ENCODE measurements at regions of chr5 and their contacts with region 1.

Region 1: GRCh38 chr5:152329761-152330283 is 75.3 kb downstream of the NMUR2 start:
- DNase-seq: no peak
- ATAC-seq: no peak
- H3K4me3 ChIP-seq: no peak overlapping the region
- H3K27ac ChIP-seq: no peak overlapping the region
- H3K4me1 ChIP-seq: no peaks in the 10 kb centered on the region
- H3K27me3 ChIP-seq: no peaks in the 10 kb centered on the region
- CTCF ChIP-seq: no peak
- EP300 ChIP-seq: no peak
- POLR2A ChIP-seq: no peak
- RAD21 ChIP-seq: no peak

Region 2: DNA sequence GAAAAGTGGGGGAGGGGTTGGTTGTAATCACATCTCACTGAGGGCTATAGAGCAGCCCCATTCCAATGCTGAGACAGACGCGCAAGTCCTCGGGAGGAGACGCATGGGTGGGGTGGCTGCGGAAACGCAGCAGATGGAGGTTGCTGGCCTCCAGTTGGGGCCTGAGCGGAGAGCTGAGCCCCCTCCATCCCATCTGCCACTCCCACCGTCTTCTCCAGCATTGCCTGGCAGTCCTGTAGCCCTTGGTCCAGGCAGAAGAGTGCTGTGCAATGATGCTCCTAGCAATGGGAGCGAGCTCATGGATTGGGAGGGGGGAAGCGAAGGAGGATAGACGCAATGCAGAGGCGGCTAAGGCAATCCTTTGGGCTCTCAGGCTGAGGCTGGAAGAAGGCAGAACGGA is 325.7 kb before region 1 on chr5:
- CTCF ChIA-PET with region 1: no interaction called
- POLR2A ChIA-PET with region 1: no interaction called
- in situ Hi-C with region 1: no loop called
- intact Hi-C with region 1: no loop called
- DNase-seq: no peak
- ATAC-seq: no peak
- H3K4me3 ChIP-seq: no peak overlapping the region
- H3K27ac ChIP-seq: no peak overlapping the region
- H3K4me1 ChIP-seq: no peaks in the 10 kb centered on the region
- H3K27me3 ChIP-seq: no peaks in the 10 kb centered on the region
- CTCF ChIP-seq: no peak
- EP300 ChIP-seq: no peak
- POLR2A ChIP-seq: no peak
- RAD21 ChIP-seq: no peak

Region 3: DNA sequence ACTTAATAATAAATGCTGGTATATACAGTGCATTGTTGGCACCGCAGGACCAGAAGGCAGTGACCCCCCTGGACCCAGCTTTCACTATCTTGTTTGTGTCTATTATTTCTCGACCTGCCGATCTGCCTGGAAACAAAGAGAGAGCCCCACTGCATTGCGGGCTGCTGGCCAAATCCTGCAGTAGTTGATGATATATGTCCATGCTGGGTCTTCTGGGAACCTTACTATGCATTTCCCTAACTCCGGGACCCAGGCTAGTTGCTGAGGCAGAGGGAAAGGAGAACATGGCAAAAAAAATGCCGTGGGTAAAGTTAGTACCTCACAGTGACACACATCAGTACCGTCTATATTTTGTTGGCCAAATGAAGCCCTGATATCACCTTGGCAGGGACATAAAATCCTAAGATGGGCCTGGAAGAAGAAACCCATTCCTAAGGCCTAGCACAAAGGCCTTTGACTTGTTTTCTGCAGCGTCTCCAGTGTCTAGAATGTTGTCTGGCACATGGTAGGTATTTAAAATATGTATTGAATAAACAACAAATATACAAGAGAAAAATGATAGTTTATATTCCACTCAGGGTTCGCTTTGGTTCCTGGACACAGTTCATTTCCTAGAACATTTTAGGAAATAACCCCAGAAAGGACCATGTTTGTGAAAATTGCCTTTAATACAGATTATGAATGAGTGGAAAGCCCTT is 29.2 kb after region 1 on chr5:
- CTCF ChIA-PET with region 1: no interaction called
- POLR2A ChIA-PET with region 1: no interaction called
- in situ Hi-C with region 1: no loop called
- intact Hi-C with region 1: loop called (anchors 1 kb)
- DNase-seq: no peak
- ATAC-seq: no peak
- H3K4me3 ChIP-seq: no peak overlapping the region
- H3K27ac ChIP-seq: no peak overlapping the region
- H3K4me1 ChIP-seq: no peaks in the 10 kb centered on the region
- H3K27me3 ChIP-seq: no peaks in the 10 kb centered on the region; a peak in 2 of 5 replicates
- CTCF ChIP-seq: no peak
- EP300 ChIP-seq: no peak
- POLR2A ChIP-seq: no peak
- RAD21 ChIP-seq: no peak

Region 4: GRCh38 chr5:152505442-152506042 is 175.7 kb after region 1 on chr5:
- CTCF ChIA-PET with region 1: no interaction called
- POLR2A ChIA-PET with region 1: no interaction called
- in situ Hi-C with region 1: no loop called
- intact Hi-C with region 1: no loop called
- DNase-seq: peak; percentile 41
- ATAC-seq: peak; percentile 90
- H3K4me3 ChIP-seq: no peak overlapping the region
- H3K27ac ChIP-seq: no peak overlapping the region
- H3K4me1 ChIP-seq: no peaks in the 10 kb centered on the region
- H3K27me3 ChIP-seq: no peaks in the 10 kb centered on the region; a peak in 1 of 5 replicates
- CTCF ChIP-seq: peak; percentile 69
- EP300 ChIP-seq: no peak
- POLR2A ChIP-seq: no peak
- RAD21 ChIP-seq: 0 out of 2 replicates have a peak, but pooled peaks have one; percentile 12

Measured in HepG2 (cell line).